Heart left ventricle (tissue), 16 donors: ENCODE measurements at regions of chr17 and their contacts with region 1.

Region 1: GRCh38 chr17:50707289-50708049 is at the start of gene ANKRD40:
- DNase-seq: peak; percentile 91 to 94 (median 91)
- ATAC-seq: peak; percentile 80 to 92 (median 88)
- H3K4me3 ChIP-seq: peak within 1 kb of the TSS; percentile 50 to 81 (median 74)
- H3K27ac ChIP-seq: peak within 1 kb of the TSS; percentile 94 to 100 (median 97)
- H3K4me1 ChIP-seq: peaks cover 0 to 60% (median 41%) of the 10 kb centered on the region in 12 donors
- H3K27me3 ChIP-seq: no peaks in the 10 kb centered on the region
- CTCF ChIP-seq: no peak
- POLR2A ChIP-seq: peak; percentile 9 to 59
- total RNA-seq, gene ANKRD40: 38.8 to 55.4 (median 47.2) TPM

Region 2: GRCh38 chr17:50279181-50279526 is 428.3 kb before region 1 on chr17:
- intact Hi-C with region 1: no loop called
- DNase-seq: no peak
- ATAC-seq: no peak
- H3K4me3 ChIP-seq: no peak overlapping the region
- H3K27ac ChIP-seq: no peak overlapping the region
- H3K4me1 ChIP-seq: peaks cover 0 to 4% (median 0%) of the 10 kb centered on the region in 12 donors
- H3K27me3 ChIP-seq: peaks cover 3 to 20% (median 5%) of the 10 kb centered on the region in 9 donors
- CTCF ChIP-seq: no peak
- POLR2A ChIP-seq: no peak

Region 3: GRCh38 chr17:50841949-50842354 is 134.5 kb after region 1 on chr17:
- intact Hi-C with region 1: loop called in 1 of 10 experiments (anchors 10 kb)
- DNase-seq: peak; percentile 49 to 81 (median 60)
- ATAC-seq: peak in 3 of 4 donors; percentile 47 to 73 (median 57)
- H3K4me3 ChIP-seq: no peak overlapping the region
- H3K27ac ChIP-seq: no peak overlapping the region
- H3K4me1 ChIP-seq: peaks cover 0 to 20% (median 6%) of the 10 kb centered on the region in 12 donors
- H3K27me3 ChIP-seq: no peaks in the 10 kb centered on the region
- CTCF ChIP-seq: peak; percentile 55 to 87 (median 79)
- POLR2A ChIP-seq: no peak